Lower lobe of right lung (tissue), 2 donors: ENCODE measurements at regions of chr20 and their contacts with region 1.

Region 1: GRCh38 chr20:35994994-35995453 is 26.6 kb downstream of the CNBD2 start:
- DNase-seq: peak; percentile 90
- ATAC-seq: peak; percentile 95 to 97
- H3K4me3 ChIP-seq: no peak overlapping the region
- H3K27ac ChIP-seq: no peak overlapping the region
- H3K4me1 ChIP-seq: no peaks in the 10 kb centered on the region
- H3K27me3 ChIP-seq: no peaks in the 10 kb centered on the region
- CTCF ChIP-seq: peak; percentile 92

Region 2: GRCh38 chr20:36116807-36117441 is 121.9 kb after region 1 on chr20:
- intact Hi-C with region 1: no loop called
- DNase-seq: no peak
- ATAC-seq: no peak
- H3K4me3 ChIP-seq: no peak overlapping the region
- H3K27ac ChIP-seq: peak overlapping the region; percentile 24
- H3K4me1 ChIP-seq: peaks cover 50% of the 10 kb centered on the region
- H3K27me3 ChIP-seq: no peaks in the 10 kb centered on the region
- CTCF ChIP-seq: no peak

Region 3: DNA sequence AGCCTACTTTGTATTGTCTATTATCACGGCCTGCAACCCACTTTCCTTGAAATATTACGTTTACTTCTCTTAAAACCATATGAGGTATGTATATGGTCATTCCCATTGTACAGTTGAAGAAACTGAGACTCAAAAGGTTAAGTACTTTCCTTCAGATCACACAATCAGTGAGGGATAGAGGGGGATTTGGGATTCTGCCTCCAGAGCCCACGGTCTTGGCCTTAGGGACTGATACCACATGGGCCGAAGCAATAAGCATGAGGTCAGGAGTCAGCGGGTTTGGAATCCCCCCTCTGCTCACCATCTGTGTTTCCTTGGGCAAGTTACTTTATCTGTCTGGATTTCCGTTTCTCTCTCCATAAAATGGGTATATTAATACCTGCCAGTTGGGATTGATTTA is 140.1 kb after region 1 on chr20:
- intact Hi-C with region 1: loop called (anchors 5 kb)
- DNase-seq: no peak
- ATAC-seq: no peak
- H3K4me3 ChIP-seq: no peak overlapping the region
- H3K27ac ChIP-seq: no peak overlapping the region
- H3K4me1 ChIP-seq: no peaks in the 10 kb centered on the region
- H3K27me3 ChIP-seq: no peaks in the 10 kb centered on the region
- CTCF ChIP-seq: no peak